H1 (cell line): ENCODE measurements at regions of chr7 and their contacts with region 1.

Region 1: GRCh38 chr7:129367700-129368388 is 66.4 kb upstream of the STRIP2 start:
- DNase-seq: peak; percentile 69 to 87
- H3K4me3 ChIP-seq: no peak overlapping the region
- H3K27ac ChIP-seq: no peak overlapping the region
- H3K4me1 ChIP-seq: peaks cover 2 to 9% (median 6%) of the 10 kb centered on the region in 4 experiments; a peak in 4 of 7 replicates
- H3K27me3 ChIP-seq: no peaks in the 10 kb centered on the region
- CTCF ChIP-seq: peak; percentile 71 to 88 (median 83)
- EP300 ChIP-seq: no peak
- POLR2A ChIP-seq: no peak
- RAD21 ChIP-seq: peak; percentile 82 to 89

Region 2: GRCh38 chr7:129224251-129225205 is 143.3 kb before region 1 on chr7 and contains the start of gene AHCYL2:
- CTCF ChIA-PET with region 1: interaction called, 64 read pairs
- POLR2A ChIA-PET with region 1: no interaction called
- DNase-seq: peak; percentile 88 to 94
- H3K4me3 ChIP-seq: peak within 1 kb of the TSS; percentile 79 to 95 (median 88)
- H3K27ac ChIP-seq: peak within 1 kb of the TSS; percentile 50
- H3K4me1 ChIP-seq: peaks cover 0 to 9% (median 4%) of the 10 kb centered on the region in 4 experiments; a peak in 3 of 7 replicates
- H3K27me3 ChIP-seq: no peaks in the 10 kb centered on the region
- CTCF ChIP-seq: no peak
- EP300 ChIP-seq: no peak
- POLR2A ChIP-seq: peak in 1 of 2 experiments; percentile 59; a peak in 2 of 3 replicates
- RAD21 ChIP-seq: 0 out of 4 replicates have a peak, but pooled peaks of 1 of the 2 experiments have one; percentile 2
- total RNA-seq, gene AHCYL2: 25.4 and 30.5 TPM in 2 replicates

Region 3: DNA sequence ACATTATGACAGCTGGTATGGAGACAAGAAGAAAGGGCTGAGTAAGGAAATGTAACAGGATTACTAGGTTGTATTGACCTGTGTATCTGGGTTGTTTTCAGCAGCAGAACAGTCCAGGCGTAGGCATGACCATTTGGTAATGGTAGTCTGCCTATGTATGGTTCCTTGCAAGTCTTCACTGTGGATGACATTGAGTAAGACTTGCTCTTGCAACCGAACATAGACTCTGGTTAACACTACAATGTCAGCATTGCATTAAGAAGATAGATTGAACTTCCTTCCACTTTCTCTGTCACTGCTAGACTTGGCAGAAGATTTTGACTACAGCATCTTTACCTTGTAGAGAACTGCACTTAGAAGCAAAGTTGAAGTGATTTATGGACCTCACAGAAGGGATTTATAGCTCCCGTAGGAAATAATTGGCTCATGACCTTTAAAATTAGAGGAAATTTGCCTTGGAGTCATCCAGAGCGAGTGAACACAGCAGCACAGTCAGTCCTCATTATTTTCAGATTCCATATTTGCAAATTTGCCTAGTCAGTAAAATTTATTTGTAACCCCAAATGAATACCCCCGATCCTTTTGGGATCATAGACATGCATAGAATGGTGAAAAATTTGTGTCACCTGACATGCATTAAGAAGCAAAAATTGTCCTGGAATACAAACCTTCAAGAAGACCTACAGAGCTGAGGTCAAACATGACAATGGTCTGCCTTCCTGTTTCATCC is 13.3 kb before region 1 on chr7:
- CTCF ChIA-PET with region 1: interaction called, 29 read pairs
- POLR2A ChIA-PET with region 1: interaction called, 4 read pairs
- DNase-seq: no peak
- H3K4me3 ChIP-seq: no peak overlapping the region
- H3K27ac ChIP-seq: no peak overlapping the region
- H3K4me1 ChIP-seq: no peaks in the 10 kb centered on the region
- H3K27me3 ChIP-seq: no peaks in the 10 kb centered on the region
- CTCF ChIP-seq: no peak
- EP300 ChIP-seq: no peak
- POLR2A ChIP-seq: no peak
- RAD21 ChIP-seq: no peak

Region 4: GRCh38 chr7:129401967-129402860 is 34.4 kb after region 1 on chr7:
- CTCF ChIA-PET with region 1: interaction called, 18 read pairs
- POLR2A ChIA-PET with region 1: interaction called, 3 read pairs
- DNase-seq: no peak
- H3K4me3 ChIP-seq: no peak overlapping the region
- H3K27ac ChIP-seq: no peak overlapping the region
- H3K4me1 ChIP-seq: peaks cover 0 to 3% (median 1%) of the 10 kb centered on the region in 4 experiments; a peak in 1 of 7 replicates
- H3K27me3 ChIP-seq: no peaks in the 10 kb centered on the region
- CTCF ChIP-seq: peak in 2 of 3 experiments; percentile 5 to 23; a peak in 2 of 4 replicates
- EP300 ChIP-seq: no peak
- POLR2A ChIP-seq: no peak
- RAD21 ChIP-seq: peak; percentile 43 to 52

Region 5: GRCh38 chr7:129462420-129462819 is 94.6 kb after region 1 on chr7:
- CTCF ChIA-PET with region 1: interaction called, 87 read pairs
- POLR2A ChIA-PET with region 1: no interaction called
- DNase-seq: no peak
- H3K4me3 ChIP-seq: no peak overlapping the region
- H3K27ac ChIP-seq: no peak overlapping the region
- H3K4me1 ChIP-seq: no peaks in the 10 kb centered on the region
- H3K27me3 ChIP-seq: no peaks in the 10 kb centered on the region
- CTCF ChIP-seq: no peak
- EP300 ChIP-seq: no peak
- POLR2A ChIP-seq: no peak
- RAD21 ChIP-seq: no peak

Region 6: GRCh38 chr7:129480674-129481365 is 113.0 kb after region 1 on chr7:
- CTCF ChIA-PET with region 1: interaction called, 10 read pairs
- POLR2A ChIA-PET with region 1: interaction called, 4 read pairs
- DNase-seq: no peak
- H3K4me3 ChIP-seq: no peak overlapping the region
- H3K27ac ChIP-seq: no peak overlapping the region
- H3K4me1 ChIP-seq: no peaks in the 10 kb centered on the region
- H3K27me3 ChIP-seq: no peaks in the 10 kb centered on the region
- CTCF ChIP-seq: no peak
- EP300 ChIP-seq: no peak
- POLR2A ChIP-seq: no peak
- RAD21 ChIP-seq: no peak